Gastrocnemius medialis (tissue), 4 donors: ENCODE measurements at regions of chr19 and their contacts with region 1.

Region 1: DNA sequence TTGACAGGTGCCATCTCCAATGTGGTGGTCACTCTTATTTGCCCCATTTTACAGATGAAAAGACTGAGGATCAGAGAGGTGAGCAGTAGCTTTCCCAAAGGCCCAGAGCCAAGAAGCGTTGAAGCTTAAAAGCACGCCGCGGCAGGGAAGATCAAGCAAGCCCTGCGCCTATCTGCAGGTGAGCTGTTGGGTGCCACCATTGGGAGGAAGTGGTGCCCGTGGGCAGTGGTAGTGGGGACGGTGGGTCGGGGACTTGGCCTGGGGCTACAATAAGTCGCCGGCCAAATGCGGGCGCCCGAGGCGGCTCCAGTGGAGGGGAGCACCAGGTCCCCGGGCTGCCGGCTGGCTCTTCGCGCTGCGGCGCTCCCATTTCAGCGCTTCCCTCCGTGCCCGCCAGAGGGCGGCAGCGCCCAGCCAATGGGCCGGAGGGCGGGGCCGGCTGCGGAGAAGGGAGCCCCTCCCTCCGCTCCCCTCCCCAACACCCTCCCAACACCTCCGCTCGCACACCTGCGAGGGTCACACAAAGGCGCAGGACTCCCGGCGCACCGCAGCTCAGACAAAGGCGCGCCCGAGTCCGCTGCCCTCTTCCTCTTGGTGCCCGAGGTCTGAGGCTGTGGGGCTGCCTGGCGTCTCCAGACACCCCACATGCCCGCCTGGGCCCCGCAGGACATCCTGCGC is 744 bp upstream of the POU2F2 start:
- DNase-seq: peak in 1 of 2 donors; percentile 22
- ATAC-seq: peak; percentile 67 to 86
- H3K4me3 ChIP-seq: peak overlapping the region; percentile 26 to 43 (median 37)
- H3K27ac ChIP-seq: no peak overlapping the region
- H3K4me1 ChIP-seq: peaks cover 3 to 7% of the 10 kb centered on the region in 2 donors
- H3K27me3 ChIP-seq: peaks cover 20 to 29% (median 22%) of the 10 kb centered on the region in 3 donors
- CTCF ChIP-seq: peak; percentile 76 to 94 (median 90)
- POLR2A ChIP-seq: no peak

Region 2: GRCh38 chr19:42092350-42092749 is 40.6 kb before region 1 on chr19:
- in situ Hi-C with region 1: no loop called
- intact Hi-C with region 1: no loop called
- DNase-seq: no peak
- ATAC-seq: peak in 1 of 2 donors; percentile 51
- H3K4me3 ChIP-seq: no peak overlapping the region
- H3K27ac ChIP-seq: no peak overlapping the region
- H3K4me1 ChIP-seq: no peaks in the 10 kb centered on the region
- H3K27me3 ChIP-seq: peaks cover 10 to 14% (median 11%) of the 10 kb centered on the region in 3 donors
- CTCF ChIP-seq: peak in 4 of 5 experiments; percentile 5 to 50 (median 44)
- POLR2A ChIP-seq: no peak

Region 3: DNA sequence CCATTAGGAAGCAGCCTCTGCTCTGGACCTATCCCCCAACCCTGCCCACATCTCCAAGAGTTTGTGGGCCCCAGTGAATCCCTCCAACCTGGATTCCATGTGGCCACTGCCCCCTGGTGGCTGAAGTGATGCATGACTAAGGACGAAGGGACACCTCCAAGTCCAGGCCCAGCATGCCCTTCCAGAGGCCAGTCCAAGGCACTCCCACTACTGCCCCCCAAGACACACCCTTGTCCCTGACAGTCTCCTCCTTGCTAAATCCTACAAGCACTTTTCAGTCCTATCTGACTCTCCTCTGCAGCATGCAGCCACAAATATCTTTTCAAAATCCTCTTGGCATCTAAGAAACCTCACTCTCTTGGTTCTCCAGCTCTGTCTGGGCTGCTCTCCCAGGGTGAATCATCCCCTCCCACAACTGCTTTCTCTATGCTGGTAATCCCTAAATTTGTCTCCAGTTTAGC is 51.4 kb after region 1 on chr19:
- in situ Hi-C with region 1: loop called in 1 of 4 experiments (anchors 10 kb)
- intact Hi-C with region 1: loop called (anchors 2 kb)
- DNase-seq: peak; percentile 16 to 53
- ATAC-seq: peak in 1 of 2 donors; percentile 33
- H3K4me3 ChIP-seq: no peak overlapping the region
- H3K27ac ChIP-seq: no peak overlapping the region
- H3K4me1 ChIP-seq: no peaks in the 10 kb centered on the region
- H3K27me3 ChIP-seq: peaks cover 19 to 26% (median 23%) of the 10 kb centered on the region in 3 donors
- CTCF ChIP-seq: peak; percentile 55 to 81 (median 73)
- POLR2A ChIP-seq: no peak

Region 4: GRCh38 chr19:42301656-42302203 is 168.7 kb after region 1 on chr19 and contains the start of gene PRR19:
- in situ Hi-C with region 1: loop called in 1 of 4 experiments (anchors 25 kb)
- intact Hi-C with region 1: loop called (anchors 5 kb)
- DNase-seq: no peak
- ATAC-seq: peak; percentile 4 to 14
- H3K4me3 ChIP-seq: peak within 1 kb of the TSS; percentile 58 to 80 (median 67)
- H3K27ac ChIP-seq: peak within 1 kb of the TSS; percentile 41 to 78 (median 62)
- H3K4me1 ChIP-seq: peaks cover 16 to 18% of the 10 kb centered on the region in 2 donors
- H3K27me3 ChIP-seq: no peaks in the 10 kb centered on the region
- CTCF ChIP-seq: no peak
- POLR2A ChIP-seq: no peak
- total RNA-seq, gene PRR19: not detected

Region 5: GRCh38 chr19:42313096-42313839 is 180.3 kb after region 1 on chr19 and contains the start of gene TMEM145:
- in situ Hi-C with region 1: loop called in 1 of 4 experiments (anchors 25 kb)
- intact Hi-C with region 1: no loop called
- DNase-seq: no peak
- ATAC-seq: peak; percentile 81 to 83
- H3K4me3 ChIP-seq: peak within 1 kb of the TSS; percentile 55 to 80 (median 60)
- H3K27ac ChIP-seq: no peak within 1 kb of the TSS
- H3K4me1 ChIP-seq: peaks cover 3 to 7% of the 10 kb centered on the region in 2 donors
- H3K27me3 ChIP-seq: peaks cover 0 to 18% (median 17%) of the 10 kb centered on the region in 3 donors
- CTCF ChIP-seq: no peak
- POLR2A ChIP-seq: no peak
- total RNA-seq, gene TMEM145: 0.87 TPM in 1 of 4 donors, not detected in the others

Region 6: GRCh38 chr19:42396381-42397262 is 263.6 kb after region 1 on chr19:
- in situ Hi-C with region 1: no loop called
- intact Hi-C with region 1: loop called (anchors 5 kb)
- DNase-seq: peak; percentile 96 to 98
- ATAC-seq: peak; percentile 98 to 99
- H3K4me3 ChIP-seq: peak overlapping the region; percentile 60 to 66 (median 63)
- H3K27ac ChIP-seq: peak overlapping the region; percentile 69 to 81 (median 74)
- H3K4me1 ChIP-seq: peaks cover 10 to 18% of the 10 kb centered on the region in 2 donors
- H3K27me3 ChIP-seq: no peaks in the 10 kb centered on the region
- CTCF ChIP-seq: no peak
- POLR2A ChIP-seq: peak; percentile 62 to 65

Region 7: GRCh38 chr19:42433503-42434260 is 300.7 kb after region 1 on chr19:
- in situ Hi-C with region 1: no loop called
- intact Hi-C with region 1: loop called (anchors 10 kb)
- DNase-seq: peak; percentile 48 to 67
- ATAC-seq: peak; percentile 78 to 85
- H3K4me3 ChIP-seq: no peak overlapping the region
- H3K27ac ChIP-seq: peak overlapping the region; percentile 37 to 65 (median 57)
- H3K4me1 ChIP-seq: peaks cover 2 to 8% of the 10 kb centered on the region in 2 donors
- H3K27me3 ChIP-seq: no peaks in the 10 kb centered on the region
- CTCF ChIP-seq: peak; percentile 28 to 64 (median 55)
- POLR2A ChIP-seq: no peak